Caco-2 (cell line): ENCODE measurements at regions of chr11 and their contacts with region 1.

Region 1: GRCh38 chr11:27183672-27184457 is 143.2 kb downstream of the BBOX1 start:
- DNase-seq: peak; percentile 54 to 64
- H3K4me3 ChIP-seq: no peak overlapping the region
- H3K4me3 Mint-ChIP-seq: no peak overlapping the region
- H3K27ac Mint-ChIP-seq: no peak overlapping the region
- H3K4me1 ChIP-seq: peaks cover 26% of the 10 kb centered on the region
- H3K4me1 Mint-ChIP-seq: peaks cover 15% of the 10 kb centered on the region
- H3K27me3 ChIP-seq: no peaks in the 10 kb centered on the region
- H3K27me3 Mint-ChIP-seq: no peaks in the 10 kb centered on the region
- CTCF ChIP-seq: peak; percentile 73 to 83

Region 2: GRCh38 chr11:27201454-27202236 is 17.8 kb after region 1 on chr11:
- CTCF ChIA-PET with region 1: interaction called, 9 read pairs
- POLR2A ChIA-PET with region 1: no interaction called
- intact Hi-C with region 1: loop called (anchors 1 kb)
- DNase-seq: peak; percentile 89 to 94
- H3K4me3 ChIP-seq: no peak overlapping the region
- H3K4me3 Mint-ChIP-seq: peak overlapping the region; percentile 63
- H3K27ac Mint-ChIP-seq: peak overlapping the region; percentile 87
- H3K4me1 ChIP-seq: peaks cover 42% of the 10 kb centered on the region
- H3K4me1 Mint-ChIP-seq: peaks cover 48% of the 10 kb centered on the region
- H3K27me3 ChIP-seq: no peaks in the 10 kb centered on the region
- H3K27me3 Mint-ChIP-seq: no peaks in the 10 kb centered on the region
- CTCF ChIP-seq: no peak

Region 3: GRCh38 chr11:27296497-27296896 is 112.6 kb after region 1 on chr11:
- CTCF ChIA-PET with region 1: interaction called, 45 read pairs
- POLR2A ChIA-PET with region 1: interaction called, 3 read pairs
- intact Hi-C with region 1: loop called (anchors 1 kb)
- DNase-seq: peak in 1 of 2 experiments; percentile 59
- H3K4me3 ChIP-seq: no peak overlapping the region
- H3K4me3 Mint-ChIP-seq: no peak overlapping the region
- H3K27ac Mint-ChIP-seq: no peak overlapping the region
- H3K4me1 ChIP-seq: no peaks in the 10 kb centered on the region
- H3K4me1 Mint-ChIP-seq: peaks cover 12% of the 10 kb centered on the region
- H3K27me3 ChIP-seq: no peaks in the 10 kb centered on the region
- H3K27me3 Mint-ChIP-seq: no peaks in the 10 kb centered on the region
- CTCF ChIP-seq: peak; percentile 61 to 83

Region 4: DNA sequence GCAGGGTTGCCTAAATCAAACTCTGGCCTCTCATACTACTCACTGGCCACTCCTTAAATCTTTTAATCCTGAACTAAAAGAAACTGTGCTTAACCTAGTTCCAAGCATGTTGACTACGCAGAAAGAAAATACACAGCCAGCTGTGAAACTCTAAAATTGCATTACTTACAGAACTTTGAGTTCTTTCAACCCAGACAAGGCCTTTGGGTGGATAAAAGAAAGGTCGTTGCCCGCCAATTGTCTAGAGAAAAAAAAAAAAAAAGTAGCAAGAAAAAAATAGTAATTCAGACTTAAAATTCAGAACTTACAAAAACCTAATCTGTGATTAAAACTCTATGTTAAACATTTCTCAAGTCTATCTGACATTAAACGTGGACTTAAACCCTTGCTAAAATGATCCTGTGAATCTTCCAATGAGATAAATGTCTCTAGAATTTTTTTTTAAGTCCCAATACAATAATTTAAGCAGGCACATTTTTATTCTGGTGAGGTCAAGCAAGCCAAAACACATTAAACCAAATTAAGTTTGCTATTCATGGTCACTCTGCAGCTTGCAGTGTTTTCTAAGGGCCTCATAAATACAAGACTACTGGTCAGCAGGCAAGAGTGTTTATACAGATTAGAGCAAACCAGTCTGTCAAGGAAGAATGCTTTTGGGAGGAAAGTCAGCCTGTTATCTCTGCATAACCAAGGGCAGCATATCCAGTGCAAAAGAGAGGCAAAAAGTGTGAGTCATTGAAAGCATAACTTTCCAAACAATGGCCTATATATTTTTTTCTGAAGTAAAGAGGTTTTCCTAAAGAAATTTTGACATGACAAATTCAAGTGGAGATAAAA is 208.6 kb after region 1 on chr11:
- CTCF ChIA-PET with region 1: interaction called, 3 read pairs
- POLR2A ChIA-PET with region 1: no interaction called
- intact Hi-C with region 1: loop called (anchors 5 kb)
- DNase-seq: peak; percentile 51 to 67
- H3K4me3 ChIP-seq: no peak overlapping the region
- H3K4me3 Mint-ChIP-seq: peak overlapping the region; percentile 22
- H3K27ac Mint-ChIP-seq: peak overlapping the region; percentile 97
- H3K4me1 ChIP-seq: peaks cover 92% of the 10 kb centered on the region
- H3K4me1 Mint-ChIP-seq: peaks cover 56% of the 10 kb centered on the region
- H3K27me3 ChIP-seq: no peaks in the 10 kb centered on the region
- H3K27me3 Mint-ChIP-seq: no peaks in the 10 kb centered on the region
- CTCF ChIP-seq: no peak

Region 5: DNA sequence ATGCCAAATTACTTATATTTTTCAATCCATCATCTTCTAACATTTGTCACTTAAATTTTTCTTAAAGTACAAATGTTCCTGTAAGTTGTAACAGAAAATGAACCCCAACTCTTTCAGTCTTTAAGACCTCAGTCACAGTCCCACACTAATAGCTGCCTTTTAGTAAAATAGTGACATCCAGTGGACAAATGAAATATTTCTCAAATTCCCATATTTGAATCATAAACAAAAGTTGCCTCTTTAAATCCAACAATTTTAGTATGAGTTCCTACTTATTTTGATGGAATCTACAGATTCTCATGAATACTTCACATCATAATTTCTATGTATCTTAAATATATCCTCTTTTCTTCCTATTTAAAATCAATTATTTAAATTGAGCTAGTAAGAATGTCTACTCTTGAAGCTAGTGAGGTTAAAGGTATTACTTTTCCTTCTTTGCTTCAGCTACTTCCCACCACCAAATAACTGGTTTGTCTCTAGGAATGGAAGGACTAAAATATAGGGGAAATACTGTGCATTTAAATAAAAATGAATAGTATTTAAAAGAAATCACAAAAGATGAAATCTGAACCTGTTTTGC is 313.5 kb after region 1 on chr11:
- CTCF ChIA-PET with region 1: interaction called, 5 read pairs
- POLR2A ChIA-PET with region 1: no interaction called
- intact Hi-C with region 1: loop called (anchors 1 kb)
- DNase-seq: no peak
- H3K4me3 ChIP-seq: no peak overlapping the region
- H3K4me3 Mint-ChIP-seq: no peak overlapping the region
- H3K27ac Mint-ChIP-seq: no peak overlapping the region
- H3K4me1 ChIP-seq: no peaks in the 10 kb centered on the region
- H3K4me1 Mint-ChIP-seq: no peaks in the 10 kb centered on the region
- H3K27me3 ChIP-seq: no peaks in the 10 kb centered on the region
- H3K27me3 Mint-ChIP-seq: no peaks in the 10 kb centered on the region
- CTCF ChIP-seq: peak in 1 of 2 experiments; percentile 55